ENCODE measurements at regions of chr3 and their contacts with region 1.

Region 1: GRCh38 chr3:194333212-194333980 is 17.7 kb downstream of the CPN2 start:
- DNase-seq: peak; percentile 93
- H3K4me3 Mint-ChIP-seq: peak overlapping the region; percentile 68
- H3K27ac Mint-ChIP-seq: no peak overlapping the region
- H3K4me1 Mint-ChIP-seq: peaks cover 11% of the 10 kb centered on the region
- H3K27me3 Mint-ChIP-seq: peaks cover 18% of the 10 kb centered on the region

Region 2: GRCh38 chr3:192696943-192697587 is 1636.3 kb before region 1 on chr3:
- CTCF ChIA-PET with region 1: no interaction called
- intact Hi-C with region 1: no loop called
- DNase-seq: no peak
- H3K4me3 Mint-ChIP-seq: no peak overlapping the region
- H3K27ac Mint-ChIP-seq: no peak overlapping the region
- H3K4me1 Mint-ChIP-seq: no peaks in the 10 kb centered on the region
- H3K27me3 Mint-ChIP-seq: no peaks in the 10 kb centered on the region

Region 3: DNA sequence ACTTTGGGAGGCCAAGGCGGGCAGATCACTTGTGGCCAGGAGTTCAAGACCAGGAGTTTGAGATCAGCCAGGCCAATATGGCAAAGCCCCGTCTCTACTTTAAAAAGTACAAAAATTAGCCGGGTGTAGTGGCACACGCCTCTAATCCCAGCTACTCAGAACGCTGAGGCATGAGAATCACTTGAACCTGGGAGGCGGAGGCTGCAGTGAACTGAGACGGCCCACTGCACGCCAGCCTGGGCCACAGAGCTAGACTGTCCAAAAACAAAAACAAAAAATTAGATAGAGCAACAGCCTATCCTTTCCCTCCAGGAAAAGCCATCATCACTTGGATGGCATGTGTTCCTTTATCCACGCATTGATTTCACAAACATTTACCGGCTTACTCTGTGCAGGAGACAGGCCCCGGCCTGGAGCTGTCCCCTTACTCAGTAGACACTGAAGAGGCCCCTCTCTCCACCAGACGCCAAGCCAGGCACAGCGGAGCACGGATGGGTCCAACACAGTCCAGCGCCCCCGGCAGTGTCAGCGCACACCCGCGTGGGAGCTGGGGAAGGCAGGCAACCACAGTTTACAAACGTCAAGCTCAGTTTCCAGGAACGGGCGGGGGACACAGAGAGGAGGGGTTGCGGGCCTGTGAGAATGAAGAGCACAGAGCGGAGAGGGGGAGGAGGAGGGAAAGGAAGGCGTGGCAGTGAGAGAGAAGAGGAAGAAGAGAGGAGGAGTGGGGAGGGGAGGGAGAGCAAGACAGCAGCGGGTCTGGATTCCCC is 62.6 kb after region 1 on chr3:
- CTCF ChIA-PET with region 1: interaction called, 166 read pairs
- intact Hi-C with region 1: loop called (anchors 2 kb)
- DNase-seq: peak; percentile 85
- H3K4me3 Mint-ChIP-seq: peak overlapping the region; percentile 42
- H3K27ac Mint-ChIP-seq: peak overlapping the region; percentile 21
- H3K4me1 Mint-ChIP-seq: peaks cover 53% of the 10 kb centered on the region
- H3K27me3 Mint-ChIP-seq: peaks cover 5% of the 10 kb centered on the region

Region 4: GRCh38 chr3:194472290-194472920 is 139.0 kb after region 1 on chr3:
- CTCF ChIA-PET with region 1: no interaction called
- intact Hi-C with region 1: loop called (anchors 5 kb)
- DNase-seq: peak; percentile 42
- H3K4me3 Mint-ChIP-seq: no peak overlapping the region
- H3K27ac Mint-ChIP-seq: no peak overlapping the region
- H3K4me1 Mint-ChIP-seq: peaks cover 24% of the 10 kb centered on the region
- H3K27me3 Mint-ChIP-seq: no peaks in the 10 kb centered on the region

Region 5: GRCh38 chr3:194592798-194593752 is 259.7 kb after region 1 on chr3:
- CTCF ChIA-PET with region 1: interaction called, 4 read pairs
- intact Hi-C with region 1: loop called (anchors 1 kb)
- DNase-seq: no peak
- H3K4me3 Mint-ChIP-seq: no peak overlapping the region
- H3K27ac Mint-ChIP-seq: no peak overlapping the region
- H3K4me1 Mint-ChIP-seq: peaks cover 3% of the 10 kb centered on the region
- H3K27me3 Mint-ChIP-seq: no peaks in the 10 kb centered on the region

Region 6: DNA sequence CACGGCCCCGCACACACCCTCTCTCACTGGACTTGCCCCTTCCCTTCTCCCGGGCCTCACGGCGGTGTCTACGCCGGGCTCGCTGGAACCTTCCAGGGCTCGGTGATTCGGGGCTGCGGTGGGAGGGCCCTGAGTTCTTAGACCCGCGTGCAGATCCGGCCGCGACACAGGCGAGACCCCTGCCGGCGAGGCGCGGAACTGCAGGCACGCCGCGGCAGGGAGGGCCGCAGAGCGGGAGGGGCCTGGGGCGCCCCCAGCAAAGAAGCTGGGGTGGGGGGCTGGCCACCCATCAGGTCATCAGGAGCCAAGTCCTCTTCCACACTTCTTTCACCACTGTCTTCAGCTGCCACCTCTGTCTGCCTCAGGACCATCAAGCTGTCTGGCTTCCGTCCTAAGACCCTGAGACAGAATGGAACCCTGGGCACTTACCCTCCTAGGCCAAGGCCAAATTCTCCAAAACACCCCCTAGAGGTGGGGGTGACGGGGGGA is 773.1 kb after region 1 on chr3:
- CTCF ChIA-PET with region 1: no interaction called
- intact Hi-C with region 1: loop called (anchors 1 kb)
- DNase-seq: peak; percentile 63
- H3K4me3 Mint-ChIP-seq: peak overlapping the region; percentile 22
- H3K27ac Mint-ChIP-seq: no peak overlapping the region
- H3K4me1 Mint-ChIP-seq: no peaks in the 10 kb centered on the region
- H3K27me3 Mint-ChIP-seq: no peaks in the 10 kb centered on the region

Measured in activated naive CD4-positive, alpha-beta T cell treated with anti-CD3 and anti-CD28 coated beads for 36 hours (primary cell).